Calu3 (cell line): ENCODE measurements at regions of chr11 and their contacts with region 1.

Region 1: GRCh38 chr11:129117595-129118350 is 74.4 kb downstream of the ARHGAP32 start:
- DNase-seq: peak; percentile 49
- H3K4me3 Mint-ChIP-seq: no peak overlapping the region
- H3K27ac Mint-ChIP-seq: no peak overlapping the region
- H3K4me1 Mint-ChIP-seq: peaks cover 31% of the 10 kb centered on the region
- H3K27me3 Mint-ChIP-seq: no peaks in the 10 kb centered on the region
- CTCF ChIP-seq: peak; percentile 69

Region 2: DNA sequence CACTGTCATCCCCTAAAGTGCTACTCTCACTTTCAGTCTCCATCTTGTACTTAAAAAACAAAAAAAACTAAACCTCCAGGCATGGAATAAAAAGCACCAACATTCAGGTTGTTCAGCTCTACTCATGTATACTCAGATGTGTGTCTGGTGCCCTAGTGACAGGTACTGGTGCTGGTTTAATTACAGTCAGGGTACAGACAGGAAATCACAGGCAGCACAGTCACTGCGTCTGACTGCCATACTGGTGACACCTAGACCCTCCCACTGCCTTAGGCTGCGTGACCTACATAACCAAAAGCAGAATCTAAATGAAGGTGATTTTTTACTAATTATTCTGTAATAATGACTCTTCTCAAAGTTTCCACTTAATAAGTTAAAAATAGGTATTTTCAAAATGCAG is 74.4 kb after region 1 on chr11 and contains the start of gene ARHGAP32:
- CTCF ChIA-PET with region 1: no interaction called
- intact Hi-C with region 1: loop called (anchors 5 kb)
- DNase-seq: peak; percentile 44
- H3K4me3 Mint-ChIP-seq: no peak within 1 kb of the TSS
- H3K27ac Mint-ChIP-seq: no peak within 1 kb of the TSS
- H3K4me1 Mint-ChIP-seq: no peaks in the 10 kb centered on the region
- H3K27me3 Mint-ChIP-seq: no peaks in the 10 kb centered on the region
- CTCF ChIP-seq: no peak
- total RNA-seq, gene ARHGAP32: 40.1 and 46.0 TPM in 2 replicates

Region 3: GRCh38 chr11:129259931-129260348 is 142.2 kb after region 1 on chr11:
- CTCF ChIA-PET with region 1: interaction called, 3 read pairs
- intact Hi-C with region 1: loop called (anchors 5 kb)
- DNase-seq: no peak
- H3K4me3 Mint-ChIP-seq: no peak overlapping the region
- H3K27ac Mint-ChIP-seq: no peak overlapping the region
- H3K4me1 Mint-ChIP-seq: peaks cover 23% of the 10 kb centered on the region
- H3K27me3 Mint-ChIP-seq: no peaks in the 10 kb centered on the region
- CTCF ChIP-seq: no peak

Region 4: GRCh38 chr11:129279326-129280026 is 161.7 kb after region 1 on chr11:
- CTCF ChIA-PET with region 1: no interaction called
- intact Hi-C with region 1: loop called (anchors 1 kb)
- DNase-seq: peak; percentile 89
- H3K4me3 Mint-ChIP-seq: peak overlapping the region; percentile 92
- H3K27ac Mint-ChIP-seq: peak overlapping the region; percentile 83
- H3K4me1 Mint-ChIP-seq: peaks cover 65% of the 10 kb centered on the region
- H3K27me3 Mint-ChIP-seq: no peaks in the 10 kb centered on the region
- CTCF ChIP-seq: no peak

Region 5: DNA sequence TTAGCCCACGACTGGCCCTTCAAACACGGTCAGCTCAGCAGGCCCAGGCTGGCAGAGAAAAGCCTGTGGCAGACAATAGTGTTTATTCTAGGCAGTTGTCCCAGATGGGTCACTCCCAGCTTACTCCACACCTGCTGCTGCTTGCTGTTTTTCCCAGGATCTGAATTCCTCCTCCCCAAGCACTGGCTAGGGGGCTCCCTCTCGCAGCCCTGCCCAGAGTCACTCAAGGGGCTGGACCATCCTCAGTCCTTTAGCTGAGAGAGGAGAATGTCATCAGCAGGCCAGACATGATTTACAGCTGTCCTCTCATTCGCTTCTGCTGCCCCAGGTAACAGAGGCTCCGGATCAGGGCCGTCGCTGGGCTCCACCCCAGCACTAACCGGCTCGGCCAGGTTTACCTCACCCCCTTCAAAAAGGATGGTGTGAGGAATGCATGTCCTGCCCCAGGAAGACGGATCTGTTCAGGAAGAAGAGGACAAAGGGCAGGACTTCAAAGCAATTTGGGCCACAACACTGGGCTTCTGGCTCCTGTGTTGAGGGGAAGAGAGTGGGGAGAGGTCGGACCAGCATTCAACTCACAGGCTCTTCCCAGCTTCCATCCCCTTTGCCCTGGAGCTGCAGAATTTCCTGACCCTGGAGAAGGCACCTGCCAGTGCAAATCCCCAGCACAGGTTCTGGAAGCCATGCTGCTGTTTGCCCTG is 198.2 kb after region 1 on chr11:
- CTCF ChIA-PET with region 1: interaction called, 6 read pairs
- intact Hi-C with region 1: loop called (anchors 5 kb)
- DNase-seq: peak; percentile 67
- H3K4me3 Mint-ChIP-seq: peak overlapping the region; percentile 30
- H3K27ac Mint-ChIP-seq: peak overlapping the region; percentile 93
- H3K4me1 Mint-ChIP-seq: peaks cover 56% of the 10 kb centered on the region
- H3K27me3 Mint-ChIP-seq: no peaks in the 10 kb centered on the region
- CTCF ChIP-seq: no peak

Region 6: DNA sequence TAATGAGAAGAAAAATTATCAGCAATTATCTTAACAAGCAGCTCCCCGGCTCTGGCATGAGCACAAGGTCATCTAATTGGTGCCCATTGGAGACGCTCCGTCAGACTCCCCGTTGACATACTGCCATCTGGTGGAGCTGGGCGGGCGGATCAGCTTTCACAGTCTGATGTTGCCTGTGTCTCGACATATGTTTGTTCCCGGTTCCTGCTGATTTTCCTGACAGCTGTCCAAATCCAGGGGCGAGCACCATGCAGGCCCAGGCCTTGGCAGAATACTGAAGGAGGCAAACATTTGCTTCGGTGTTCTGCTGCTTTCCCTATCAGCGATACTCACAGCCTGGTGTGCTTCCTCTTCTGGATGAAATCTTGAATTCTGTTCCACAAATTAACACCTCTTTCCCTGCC is 214.1 kb after region 1 on chr11:
- CTCF ChIA-PET with region 1: interaction called, 8 read pairs
- intact Hi-C with region 1: loop called (anchors 2 kb)
- DNase-seq: peak; percentile 82
- H3K4me3 Mint-ChIP-seq: no peak overlapping the region
- H3K27ac Mint-ChIP-seq: no peak overlapping the region
- H3K4me1 Mint-ChIP-seq: peaks cover 8% of the 10 kb centered on the region
- H3K27me3 Mint-ChIP-seq: no peaks in the 10 kb centered on the region
- CTCF ChIP-seq: peak; percentile 66

Region 7: GRCh38 chr11:129750349-129751292 is 632.8 kb after region 1 on chr11:
- CTCF ChIA-PET with region 1: no interaction called
- intact Hi-C with region 1: loop called (anchors 5 kb)
- DNase-seq: peak; percentile 81
- H3K4me3 Mint-ChIP-seq: peak overlapping the region; percentile 41
- H3K27ac Mint-ChIP-seq: no peak overlapping the region
- H3K4me1 Mint-ChIP-seq: no peaks in the 10 kb centered on the region
- H3K27me3 Mint-ChIP-seq: no peaks in the 10 kb centered on the region
- CTCF ChIP-seq: peak; percentile 98